ENCODE measurements at regions of chr18 and their contacts with region 1.

Region 1: DNA sequence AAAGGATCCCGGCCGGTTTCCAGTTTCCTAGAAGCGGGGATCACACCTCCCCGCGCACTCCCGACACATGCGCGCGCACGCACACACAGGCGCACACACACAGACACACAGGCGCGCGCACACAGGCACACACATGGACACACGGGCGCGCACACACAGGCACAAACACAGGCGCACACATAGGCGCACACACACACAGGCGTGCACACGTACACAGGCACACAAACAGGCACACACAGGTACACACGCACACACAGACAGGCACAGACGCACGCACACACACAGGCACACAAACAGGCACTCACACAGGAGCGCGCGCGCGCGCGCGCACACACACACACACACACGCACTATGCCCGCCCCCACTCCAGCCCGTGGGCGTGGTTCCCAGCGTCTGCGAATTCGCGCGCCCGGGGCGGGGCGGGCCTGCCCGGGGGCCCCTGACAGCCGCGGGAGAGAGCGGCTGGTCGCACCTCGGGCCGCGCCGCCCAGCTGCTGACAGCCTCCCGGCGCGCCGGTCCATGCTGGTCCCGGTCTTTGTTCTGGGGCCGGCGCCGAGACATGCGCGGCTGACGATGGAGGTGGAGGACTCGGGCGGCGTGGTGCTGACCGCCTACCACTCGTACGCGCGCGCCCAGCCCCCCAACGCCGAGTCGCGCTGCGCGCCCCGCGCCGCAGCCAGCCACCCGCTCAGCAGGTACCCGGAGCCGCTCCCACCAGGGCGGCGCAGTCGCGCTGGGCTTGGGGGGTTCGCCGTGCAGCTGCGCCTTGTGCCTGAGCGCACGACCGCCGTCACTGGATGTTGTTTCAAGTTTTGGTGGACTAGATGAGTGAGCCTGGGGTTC is at the start of gene ARHGAP28:
- DNase-seq: peak; percentile 89
- ATAC-seq: peak; percentile 74
- H3K4me3 ChIP-seq: peak within 1 kb of the TSS; percentile 67
- H3K27ac ChIP-seq: peak within 1 kb of the TSS; percentile 67
- H3K4me1 ChIP-seq: peaks cover 37% of the 10 kb centered on the region
- H3K27me3 ChIP-seq: no peaks in the 10 kb centered on the region
- CTCF ChIP-seq: peak; percentile 53
- total RNA-seq, gene ARHGAP28: 8.1 and 10.0 TPM in 2 replicates

Region 2: DNA sequence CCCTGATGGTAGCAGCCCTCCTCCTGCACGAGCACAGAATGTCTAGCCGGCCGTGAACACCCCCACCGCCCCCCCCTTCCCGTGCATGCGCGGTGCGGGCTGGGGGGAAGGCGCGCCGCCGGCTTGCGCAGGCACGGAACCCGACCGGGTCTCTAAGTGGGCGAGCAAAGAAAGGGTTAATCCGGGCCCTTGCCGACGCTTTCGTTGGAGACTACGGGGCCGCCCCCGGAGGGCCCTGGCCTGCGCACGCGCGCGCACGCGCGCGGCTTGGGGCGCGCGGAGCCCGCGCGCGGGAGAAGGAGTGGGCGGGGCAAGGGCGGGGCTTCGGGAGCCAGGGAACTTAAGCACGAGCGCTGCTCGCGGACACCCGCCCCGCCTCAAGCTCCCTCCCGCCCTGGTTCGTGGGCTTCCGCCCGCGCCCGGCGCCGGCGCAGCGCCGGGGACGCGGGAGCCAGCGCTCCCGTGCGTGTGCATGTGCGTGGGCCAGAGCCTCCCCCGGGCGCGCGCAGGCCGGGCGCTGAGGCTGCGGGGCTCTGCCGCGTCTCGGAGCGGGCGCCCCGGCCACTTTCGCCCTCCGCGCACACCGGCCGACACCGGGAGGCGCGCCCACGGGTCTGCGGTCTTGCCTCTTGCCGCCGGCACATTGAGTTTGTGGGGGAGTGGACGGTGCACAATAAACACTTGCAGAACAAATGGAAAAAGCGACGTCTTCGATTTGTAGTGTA is 1433.3 kb before region 1 on chr18:
- CTCF ChIA-PET with region 1: no interaction called
- POLR2A ChIA-PET with region 1: no interaction called
- intact Hi-C with region 1: loop called (anchors 2 kb)
- DNase-seq: peak; percentile 94
- ATAC-seq: peak; percentile 58
- H3K4me3 ChIP-seq: peak overlapping the region; percentile 75
- H3K27ac ChIP-seq: peak overlapping the region; percentile 58
- H3K4me1 ChIP-seq: peaks cover 6% of the 10 kb centered on the region; the same call in 1 of the 2 replicates
- H3K27me3 ChIP-seq: peaks cover 14% of the 10 kb centered on the region; the same call in 1 of the 2 replicates
- CTCF ChIP-seq: no peak

Region 3: GRCh38 chr18:5890331-5891183 is 838.9 kb before region 1 on chr18:
- CTCF ChIA-PET with region 1: no interaction called
- POLR2A ChIA-PET with region 1: no interaction called
- intact Hi-C with region 1: loop called (anchors 10 kb)
- DNase-seq: peak; percentile 56
- ATAC-seq: peak; percentile 80
- H3K4me3 ChIP-seq: peak overlapping the region; percentile 65
- H3K27ac ChIP-seq: no peak overlapping the region
- H3K4me1 ChIP-seq: 0 out of 2 replicates have a peak, but pooled peaks cover 4% of the 10 kb centered on the region
- H3K27me3 ChIP-seq: peaks cover 17% of the 10 kb centered on the region
- CTCF ChIP-seq: peak; percentile 37; the same call in 1 of the 2 replicates

Region 4: GRCh38 chr18:6764382-6764781 is 34.9 kb after region 1 on chr18:
- CTCF ChIA-PET with region 1: no interaction called
- POLR2A ChIA-PET with region 1: no interaction called
- intact Hi-C with region 1: no loop called
- DNase-seq: no peak
- ATAC-seq: no peak
- H3K4me3 ChIP-seq: no peak overlapping the region
- H3K27ac ChIP-seq: no peak overlapping the region
- H3K4me1 ChIP-seq: no peaks in the 10 kb centered on the region
- H3K27me3 ChIP-seq: no peaks in the 10 kb centered on the region
- CTCF ChIP-seq: no peak

Region 5: GRCh38 chr18:6807515-6808257 is 78.2 kb after region 1 on chr18:
- CTCF ChIA-PET with region 1: no interaction called
- POLR2A ChIA-PET with region 1: interaction called, 4 read pairs
- intact Hi-C with region 1: loop called (anchors 5 kb)
- DNase-seq: peak; percentile 39
- ATAC-seq: peak; percentile 95
- H3K4me3 ChIP-seq: no peak overlapping the region
- H3K27ac ChIP-seq: no peak overlapping the region
- H3K4me1 ChIP-seq: peaks cover 15% of the 10 kb centered on the region
- H3K27me3 ChIP-seq: no peaks in the 10 kb centered on the region
- CTCF ChIP-seq: no peak

Region 6: DNA sequence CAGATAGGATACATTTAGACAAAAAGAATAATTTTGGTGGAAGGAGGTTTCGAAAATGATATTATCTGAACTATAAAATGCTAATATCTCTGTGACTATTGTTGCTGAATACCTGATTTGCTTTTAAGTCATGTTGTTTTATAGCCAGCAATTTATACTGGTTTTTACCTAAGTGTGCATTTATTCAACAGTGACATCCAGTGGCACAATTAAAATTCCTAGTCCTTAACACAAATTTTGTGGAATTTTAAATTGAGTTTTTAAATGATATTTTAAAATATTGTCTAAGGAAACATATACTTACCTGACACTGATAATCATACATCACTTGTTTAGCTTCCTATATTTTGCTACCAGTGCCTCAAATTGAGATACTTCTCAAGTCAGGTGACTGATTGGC is 144.8 kb after region 1 on chr18:
- CTCF ChIA-PET with region 1: no interaction called
- POLR2A ChIA-PET with region 1: no interaction called
- intact Hi-C with region 1: loop called (anchors 1 kb)
- DNase-seq: peak; percentile 44
- ATAC-seq: peak; percentile 46; the same call in 1 of the 2 replicates
- H3K4me3 ChIP-seq: no peak overlapping the region
- H3K27ac ChIP-seq: no peak overlapping the region
- H3K4me1 ChIP-seq: no peaks in the 10 kb centered on the region
- H3K27me3 ChIP-seq: no peaks in the 10 kb centered on the region
- CTCF ChIP-seq: peak; percentile 63

Region 7: GRCh38 chr18:6885992-6886796 is 156.7 kb after region 1 on chr18:
- CTCF ChIA-PET with region 1: no interaction called
- POLR2A ChIA-PET with region 1: no interaction called
- intact Hi-C with region 1: loop called (anchors 2 kb)
- DNase-seq: peak; percentile 73
- ATAC-seq: peak; percentile 96
- H3K4me3 ChIP-seq: no peak overlapping the region
- H3K27ac ChIP-seq: no peak overlapping the region
- H3K4me1 ChIP-seq: no peaks in the 10 kb centered on the region
- H3K27me3 ChIP-seq: no peaks in the 10 kb centered on the region
- CTCF ChIP-seq: peak; percentile 90

Region 8: DNA sequence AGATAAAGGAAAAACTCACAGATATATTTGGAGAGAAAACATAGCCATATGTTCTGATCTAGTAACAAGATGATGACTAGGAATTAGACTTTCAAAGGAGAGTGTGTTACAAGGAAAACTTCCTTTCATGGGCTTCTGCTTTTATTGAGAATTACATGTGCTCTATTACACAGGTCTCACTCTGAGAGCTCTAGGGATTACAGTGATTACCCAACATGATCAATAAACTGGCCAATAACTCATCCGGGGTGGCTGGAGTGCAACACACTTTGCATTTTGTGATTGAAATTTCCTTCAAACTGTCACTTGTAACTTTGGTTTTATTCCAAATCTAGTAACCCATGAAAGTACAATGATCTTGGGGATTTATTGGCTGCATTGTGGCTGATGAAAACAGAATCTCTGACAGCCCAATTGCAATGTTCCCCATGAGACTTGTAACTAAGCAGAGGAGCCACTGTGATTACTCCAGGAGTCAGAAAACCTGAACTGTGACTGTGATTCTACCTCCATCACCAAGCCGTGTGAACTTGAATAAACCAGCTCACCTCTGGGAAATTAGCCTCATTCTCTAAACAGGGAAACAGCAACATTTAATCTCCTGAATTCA is 461.2 kb after region 1 on chr18:
- CTCF ChIA-PET with region 1: no interaction called
- POLR2A ChIA-PET with region 1: no interaction called
- intact Hi-C with region 1: no loop called
- DNase-seq: no peak
- ATAC-seq: no peak
- H3K4me3 ChIP-seq: no peak overlapping the region
- H3K27ac ChIP-seq: no peak overlapping the region
- H3K4me1 ChIP-seq: no peaks in the 10 kb centered on the region
- H3K27me3 ChIP-seq: peaks cover 49% of the 10 kb centered on the region
- CTCF ChIP-seq: no peak

Measured in PC-3 (cell line).